CD4-positive, alpha-beta T cell (primary cell): ENCODE measurements at regions of chr12 and their contacts with region 1.

Region 1: GRCh38 chr12:92136965-92137721 is 8.5 kb downstream of the BTG1 start:
- DNase-seq: peak in 2 of 14 experiments; percentile 52 to 56
- ATAC-seq: no peak
- H3K4me3 ChIP-seq: peak overlapping the region; percentile 94
- H3K4me3 Mint-ChIP-seq: peak overlapping the region; percentile 100
- H3K27ac ChIP-seq: peak overlapping the region; percentile 29 to 62
- H3K27ac Mint-ChIP-seq: peak overlapping the region; percentile 99
- H3K4me1 ChIP-seq: peaks cover 31% of the 10 kb centered on the region
- H3K4me1 Mint-ChIP-seq: peaks cover 55% of the 10 kb centered on the region
- H3K27me3 ChIP-seq: no peaks in the 10 kb centered on the region
- H3K27me3 Mint-ChIP-seq: no peaks in the 10 kb centered on the region
- CTCF ChIP-seq: no peak

Region 2: DNA sequence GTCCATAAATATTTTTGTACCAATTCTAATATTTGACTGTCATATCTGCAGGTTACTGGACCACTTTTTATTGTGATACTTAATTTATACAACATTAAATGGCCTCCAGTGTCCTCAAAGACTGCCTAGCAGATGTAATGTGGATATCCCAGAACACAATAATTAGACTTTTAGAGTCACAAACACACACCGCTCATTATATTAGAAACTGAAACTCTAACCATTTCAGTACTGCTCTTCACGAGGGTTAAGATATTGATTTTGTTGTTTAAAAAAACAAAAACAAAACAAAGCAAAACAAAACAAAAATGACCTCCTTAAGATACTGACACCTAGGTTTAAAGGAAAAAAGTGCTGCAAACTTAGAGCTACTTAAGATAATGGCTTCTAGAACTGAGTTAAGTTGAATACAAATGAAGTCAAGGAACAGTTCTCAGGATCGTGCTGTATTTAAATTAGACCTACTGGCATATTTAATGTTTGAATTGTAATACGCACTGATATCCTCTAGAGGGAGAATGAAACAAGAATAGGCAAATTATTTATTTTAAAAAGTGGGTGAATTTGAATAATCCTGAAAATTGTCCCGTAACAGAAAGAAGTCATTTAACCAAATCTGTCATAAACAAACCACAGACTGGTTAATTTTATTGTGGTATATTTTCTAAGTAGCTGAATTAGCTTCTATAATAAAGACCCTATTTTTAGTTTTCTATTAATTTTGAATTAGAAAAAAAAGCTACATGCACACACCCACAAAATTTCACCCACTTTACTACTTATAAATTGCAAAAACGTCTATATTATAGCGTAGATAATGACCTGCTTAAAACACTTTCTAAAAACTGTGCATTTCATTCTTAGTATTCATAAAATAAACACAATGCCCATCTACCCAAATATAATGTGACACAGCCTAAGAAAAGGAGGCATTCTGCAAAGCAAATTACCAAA is 559.3 kb before region 1 on chr12:
- CTCF ChIA-PET with region 1: interaction called, 3 read pairs
- POLR2A ChIA-PET with region 1: interaction called, 15 read pairs
- intact Hi-C with region 1: loop called (anchors 2 to 10 kb)
- DNase-seq: peak in 3 of 14 experiments; percentile 47 to 57 (median 50)
- ATAC-seq: peak; percentile 82
- H3K4me3 ChIP-seq: peak overlapping the region; percentile 47
- H3K4me3 Mint-ChIP-seq: peak overlapping the region; percentile 76
- H3K27ac ChIP-seq: no peak overlapping the region
- H3K27ac Mint-ChIP-seq: peak overlapping the region; percentile 28
- H3K4me1 ChIP-seq: no peaks in the 10 kb centered on the region
- H3K4me1 Mint-ChIP-seq: peaks cover 15% of the 10 kb centered on the region
- H3K27me3 ChIP-seq: no peaks in the 10 kb centered on the region
- H3K27me3 Mint-ChIP-seq: no peaks in the 10 kb centered on the region
- CTCF ChIP-seq: peak; percentile 85

Region 3: DNA sequence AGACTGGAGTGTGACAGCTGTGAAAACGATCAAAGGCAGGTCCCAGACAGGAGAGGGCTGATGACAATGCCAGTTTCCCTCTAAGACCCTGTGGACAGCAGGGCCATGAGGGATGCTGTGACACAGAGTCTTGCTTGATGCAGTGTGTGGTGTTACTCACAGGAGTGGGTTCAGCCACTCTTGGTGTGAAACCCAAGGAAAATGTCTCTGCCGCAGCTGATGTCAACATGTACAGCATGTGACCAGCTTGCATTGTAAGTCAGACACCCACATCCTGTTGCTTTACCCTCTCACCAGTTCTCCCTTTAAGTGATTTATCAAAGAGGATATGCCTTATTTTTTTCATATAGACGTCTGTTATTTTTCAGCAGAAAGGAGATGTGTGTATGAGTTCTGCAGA is 260.1 kb before region 1 on chr12:
- CTCF ChIA-PET with region 1: no interaction called
- POLR2A ChIA-PET with region 1: interaction called, 23 read pairs
- intact Hi-C with region 1: loop called in 1 of 2 experiments (anchors 1 kb)
- DNase-seq: peak; percentile 71 to 98 (median 82)
- ATAC-seq: peak; percentile 90
- H3K4me3 ChIP-seq: peak overlapping the region; percentile 30
- H3K4me3 Mint-ChIP-seq: peak overlapping the region; percentile 73
- H3K27ac ChIP-seq: peak overlapping the region; percentile 92 to 97
- H3K27ac Mint-ChIP-seq: peak overlapping the region; percentile 98
- H3K4me1 ChIP-seq: peaks cover 44% of the 10 kb centered on the region
- H3K4me1 Mint-ChIP-seq: peaks cover 67% of the 10 kb centered on the region
- H3K27me3 ChIP-seq: no peaks in the 10 kb centered on the region
- H3K27me3 Mint-ChIP-seq: no peaks in the 10 kb centered on the region
- CTCF ChIP-seq: no peak

Region 4: GRCh38 chr12:92034858-92035401 is 102.2 kb before region 1 on chr12:
- CTCF ChIA-PET with region 1: no interaction called
- POLR2A ChIA-PET with region 1: interaction called, 276 read pairs
- intact Hi-C with region 1: loop called (anchors 2 to 5 kb)
- DNase-seq: peak; percentile 26 to 84 (median 58)
- ATAC-seq: peak; percentile 53
- H3K4me3 ChIP-seq: peak overlapping the region; percentile 54
- H3K4me3 Mint-ChIP-seq: peak overlapping the region; percentile 89
- H3K27ac ChIP-seq: peak overlapping the region; percentile 66 to 67
- H3K27ac Mint-ChIP-seq: peak overlapping the region; percentile 96
- H3K4me1 ChIP-seq: peaks cover 79% of the 10 kb centered on the region
- H3K4me1 Mint-ChIP-seq: peaks cover 95% of the 10 kb centered on the region
- H3K27me3 ChIP-seq: no peaks in the 10 kb centered on the region
- H3K27me3 Mint-ChIP-seq: no peaks in the 10 kb centered on the region
- CTCF ChIP-seq: no peak

Region 5: GRCh38 chr12:92094751-92095161 is 42.4 kb before region 1 on chr12:
- CTCF ChIA-PET with region 1: no interaction called
- POLR2A ChIA-PET with region 1: interaction called, 3 read pairs
- intact Hi-C with region 1: loop called in 1 of 2 experiments (anchors 5 kb)
- DNase-seq: no peak
- ATAC-seq: no peak
- H3K4me3 ChIP-seq: no peak overlapping the region
- H3K4me3 Mint-ChIP-seq: no peak overlapping the region
- H3K27ac ChIP-seq: no peak overlapping the region
- H3K27ac Mint-ChIP-seq: no peak overlapping the region
- H3K4me1 ChIP-seq: peaks cover 14% of the 10 kb centered on the region
- H3K4me1 Mint-ChIP-seq: peaks cover 79% of the 10 kb centered on the region
- H3K27me3 ChIP-seq: no peaks in the 10 kb centered on the region
- H3K27me3 Mint-ChIP-seq: no peaks in the 10 kb centered on the region
- CTCF ChIP-seq: no peak

Region 6: DNA sequence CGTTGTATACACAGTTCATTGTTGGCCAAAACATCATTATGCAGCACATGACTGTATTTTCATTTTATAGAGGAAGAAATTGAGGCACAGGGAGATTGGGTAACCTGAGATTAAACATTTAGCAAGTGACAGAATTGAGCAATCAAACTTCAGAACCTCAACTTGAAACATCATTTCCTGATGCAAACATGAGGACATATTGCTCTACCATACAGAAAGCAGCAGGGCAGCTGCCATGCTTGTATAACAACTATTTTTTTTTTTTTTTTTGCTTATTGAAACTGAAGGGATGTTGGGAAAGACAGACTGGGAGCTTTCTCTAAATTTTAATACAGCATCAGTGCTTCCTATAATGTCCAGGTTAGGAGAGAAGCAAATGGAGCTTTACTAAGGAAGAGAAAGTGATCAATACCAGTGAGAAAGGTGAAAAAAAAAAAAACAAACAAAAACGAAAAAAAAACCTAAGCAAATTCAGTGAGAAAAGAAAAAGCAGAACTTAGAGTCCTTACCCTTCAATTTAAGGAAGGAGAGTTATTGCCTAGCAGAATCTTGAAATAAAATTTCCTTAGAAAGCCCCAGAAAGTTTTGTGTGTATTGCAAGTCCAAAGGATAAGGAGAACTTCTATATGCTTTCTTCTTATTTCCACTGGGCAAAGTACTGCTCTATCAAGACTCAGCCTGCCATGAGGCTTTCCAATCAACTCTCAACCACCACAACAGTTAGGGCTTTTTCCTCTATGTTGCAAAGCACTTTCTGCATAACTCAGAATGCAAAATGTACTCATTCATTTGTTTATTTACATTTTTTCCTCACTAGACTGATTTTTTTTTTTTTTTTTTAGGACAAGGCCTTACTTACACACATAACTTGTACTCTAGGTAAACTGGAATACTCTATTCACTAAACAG is 13.1 kb before region 1 on chr12:
- CTCF ChIA-PET with region 1: no interaction called
- POLR2A ChIA-PET with region 1: interaction called, 298 read pairs
- intact Hi-C with region 1: loop called in 1 of 2 experiments (anchors 2 kb)
- DNase-seq: no peak
- ATAC-seq: peak; percentile 13
- H3K4me3 ChIP-seq: no peak overlapping the region
- H3K4me3 Mint-ChIP-seq: peak overlapping the region; percentile 43
- H3K27ac ChIP-seq: no peak overlapping the region
- H3K27ac Mint-ChIP-seq: peak overlapping the region; percentile 76
- H3K4me1 ChIP-seq: peaks cover 18% of the 10 kb centered on the region
- H3K4me1 Mint-ChIP-seq: peaks cover 72% of the 10 kb centered on the region
- H3K27me3 ChIP-seq: no peaks in the 10 kb centered on the region
- H3K27me3 Mint-ChIP-seq: no peaks in the 10 kb centered on the region
- CTCF ChIP-seq: no peak